Activated CD4-positive, alpha-beta T cell treated with anti-CD3 and anti-CD28 coated beads for 36 hours (primary cell): ENCODE measurements at regions of chr9 and their contacts with region 1.

Region 1: DNA sequence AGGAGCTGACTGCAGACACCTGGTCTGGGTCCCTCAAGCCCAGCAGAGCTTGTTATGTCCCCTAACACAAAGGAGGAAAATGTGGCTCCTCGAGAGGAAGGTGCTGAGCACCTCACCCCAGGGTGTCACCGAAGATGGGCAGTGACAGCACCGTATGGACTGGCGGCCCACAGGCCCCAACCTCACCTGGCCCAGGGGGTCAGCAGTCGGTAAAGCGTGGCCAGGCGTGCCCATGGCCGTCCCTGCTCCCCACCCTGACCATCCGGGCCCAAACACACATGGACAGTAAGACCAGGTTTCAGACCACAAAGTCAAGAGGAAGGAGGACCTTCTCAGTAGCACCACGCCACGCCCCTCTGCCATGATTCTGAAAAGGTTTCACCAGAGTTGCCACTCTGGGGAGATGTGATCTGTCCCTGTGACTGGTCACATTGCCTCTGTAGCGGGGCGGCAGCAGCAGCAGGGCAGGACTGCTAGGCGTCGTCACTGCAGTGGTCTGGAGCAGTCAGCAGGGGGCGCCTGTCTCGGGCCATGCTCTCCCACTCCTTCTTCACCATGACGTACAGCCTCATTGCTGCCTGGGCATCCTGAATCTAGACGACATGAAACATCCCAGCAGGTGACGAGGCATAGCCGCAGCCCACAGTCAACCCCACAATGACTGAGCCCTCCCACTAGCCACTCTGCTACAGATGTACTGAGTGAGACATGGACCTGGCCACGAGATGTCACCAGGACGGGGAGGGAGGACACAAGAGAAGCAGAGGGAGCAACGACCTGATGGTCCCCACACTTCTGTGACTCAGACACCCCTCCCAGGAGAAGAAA is 11.1 kb downstream of the REXO4 start:
- DNase-seq: peak; percentile 93
- ATAC-seq: peak; percentile 94
- H3K4me3 Mint-ChIP-seq: no peak overlapping the region
- H3K27ac Mint-ChIP-seq: peak overlapping the region; percentile 48
- H3K4me1 Mint-ChIP-seq: peaks cover 6% of the 10 kb centered on the region
- H3K27me3 Mint-ChIP-seq: no peaks in the 10 kb centered on the region

Region 2: DNA sequence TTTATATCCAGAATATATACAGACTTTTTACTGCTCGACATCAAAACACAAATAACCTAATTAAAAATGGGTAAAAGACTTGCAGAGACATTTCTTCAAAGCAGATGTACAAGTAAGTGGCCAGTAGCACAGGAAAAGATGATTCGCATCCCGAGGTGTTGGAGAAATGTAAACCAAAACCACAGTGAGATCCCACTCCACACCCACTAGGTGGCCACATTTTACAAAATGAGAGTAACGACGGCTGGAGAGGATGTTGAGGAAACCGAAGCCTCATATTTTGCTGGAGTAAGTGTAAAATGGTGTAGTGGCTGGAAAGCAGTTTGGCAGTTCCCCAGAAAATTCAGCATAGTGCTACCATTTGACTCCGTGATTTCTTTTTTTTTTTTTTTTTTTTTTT is 221.7 kb before region 1 on chr9:
- CTCF ChIA-PET with region 1: interaction called, 4 read pairs
- POLR2A ChIA-PET with region 1: no interaction called
- intact Hi-C with region 1: loop called in 1 of 2 experiments (anchors 2 kb)
- DNase-seq: peak; percentile 70
- ATAC-seq: peak; percentile 54
- H3K4me3 Mint-ChIP-seq: no peak overlapping the region
- H3K27ac Mint-ChIP-seq: no peak overlapping the region
- H3K4me1 Mint-ChIP-seq: peaks cover 23% of the 10 kb centered on the region
- H3K27me3 Mint-ChIP-seq: peaks cover 14% of the 10 kb centered on the region

Region 3: DNA sequence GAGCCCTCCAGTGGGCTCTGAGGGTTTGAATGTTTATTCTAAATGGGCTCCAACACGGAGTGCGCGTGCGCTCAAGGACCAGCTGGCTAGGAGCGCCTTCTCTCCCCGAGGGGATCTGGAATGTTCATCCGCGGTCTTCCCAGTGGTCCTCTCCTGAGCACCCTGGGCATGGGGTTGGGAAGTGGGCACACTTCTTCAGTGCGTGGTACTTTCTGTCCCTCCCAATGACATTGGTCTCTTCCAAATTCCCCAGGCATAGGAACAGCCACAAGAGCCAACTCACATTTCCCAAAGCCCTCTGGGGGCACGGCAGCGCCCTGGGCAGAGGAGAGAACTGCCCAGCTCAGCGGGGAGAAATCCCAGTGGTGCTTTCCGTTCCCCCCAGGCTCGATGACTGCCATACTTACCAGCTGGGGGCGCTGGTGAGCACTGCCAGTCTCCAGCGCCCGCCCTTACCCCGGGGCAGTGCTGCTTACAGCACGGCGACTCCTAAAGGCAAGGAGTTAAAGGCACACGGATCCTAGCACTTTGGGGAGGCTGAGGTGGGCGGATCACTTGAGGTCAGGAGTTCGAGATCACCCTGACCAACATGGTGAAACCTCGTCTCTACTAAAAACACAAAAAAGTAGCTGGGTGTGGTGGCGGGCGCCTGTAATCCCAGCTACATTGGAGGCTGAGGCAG is 167.7 kb before region 1 on chr9:
- CTCF ChIA-PET with region 1: no interaction called
- POLR2A ChIA-PET with region 1: no interaction called
- intact Hi-C with region 1: loop called in 1 of 2 experiments (anchors 1 kb)
- DNase-seq: peak; percentile 88
- ATAC-seq: peak; percentile 97
- H3K4me3 Mint-ChIP-seq: peak overlapping the region; percentile 52
- H3K27ac Mint-ChIP-seq: no peak overlapping the region
- H3K4me1 Mint-ChIP-seq: peaks cover 7% of the 10 kb centered on the region
- H3K27me3 Mint-ChIP-seq: peaks cover 5% of the 10 kb centered on the region

Region 4: DNA sequence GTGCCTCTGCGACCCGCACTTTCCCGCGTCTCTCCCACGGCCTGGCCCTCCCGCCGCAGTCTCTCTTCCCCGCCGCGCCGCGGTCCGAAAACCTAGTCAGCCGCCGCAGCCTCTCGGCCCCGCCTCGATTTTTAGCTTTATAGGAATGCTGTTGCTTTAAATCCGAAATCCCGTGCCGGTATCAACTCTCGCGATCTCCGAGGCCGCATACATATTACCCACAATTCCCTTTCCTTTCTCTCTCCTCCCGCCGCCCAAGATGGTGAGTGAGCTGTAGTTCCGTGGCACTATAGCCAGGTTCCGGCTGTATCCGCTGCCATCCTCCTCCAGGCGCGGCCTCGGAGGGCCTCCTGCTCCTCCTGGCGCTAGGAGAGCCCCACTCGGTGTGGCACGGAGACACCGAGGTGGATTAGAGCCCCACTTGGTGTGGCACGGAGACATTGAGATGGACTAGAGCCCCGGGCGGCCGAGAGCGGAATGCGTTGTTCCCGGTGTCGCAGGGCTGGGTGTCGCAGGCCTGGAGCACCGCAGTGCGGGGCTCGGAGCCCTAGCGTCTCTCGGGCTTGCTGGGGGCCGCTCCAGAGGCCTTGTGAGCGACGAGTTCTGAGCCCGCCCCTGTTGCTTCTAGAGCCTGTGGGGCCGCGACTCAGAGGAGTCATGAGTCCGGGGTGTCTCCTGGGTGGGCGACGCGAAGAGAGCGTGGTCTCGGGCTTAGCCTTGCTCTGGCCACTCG is 58.5 kb before region 1 on chr9 and contains the starts of genes MED22 and RPL7A:
- CTCF ChIA-PET with region 1: no interaction called
- POLR2A ChIA-PET with region 1: no interaction called
- intact Hi-C with region 1: loop called in 1 of 2 experiments (anchors 2 kb)
- DNase-seq: peak; percentile 96
- ATAC-seq: peak; percentile 83
- H3K4me3 Mint-ChIP-seq: peak within 1 kb of the TSS; percentile 97
- H3K27ac Mint-ChIP-seq: peak within 1 kb of the TSS; percentile 97
- H3K4me1 Mint-ChIP-seq: peaks cover 36% of the 10 kb centered on the region
- H3K27me3 Mint-ChIP-seq: no peaks in the 10 kb centered on the region
- total RNA-seq, gene MED22: 22.9 to 26.4 TPM
- total RNA-seq, gene RPL7A: 3,179 to 3,246 TPM

Region 5: DNA sequence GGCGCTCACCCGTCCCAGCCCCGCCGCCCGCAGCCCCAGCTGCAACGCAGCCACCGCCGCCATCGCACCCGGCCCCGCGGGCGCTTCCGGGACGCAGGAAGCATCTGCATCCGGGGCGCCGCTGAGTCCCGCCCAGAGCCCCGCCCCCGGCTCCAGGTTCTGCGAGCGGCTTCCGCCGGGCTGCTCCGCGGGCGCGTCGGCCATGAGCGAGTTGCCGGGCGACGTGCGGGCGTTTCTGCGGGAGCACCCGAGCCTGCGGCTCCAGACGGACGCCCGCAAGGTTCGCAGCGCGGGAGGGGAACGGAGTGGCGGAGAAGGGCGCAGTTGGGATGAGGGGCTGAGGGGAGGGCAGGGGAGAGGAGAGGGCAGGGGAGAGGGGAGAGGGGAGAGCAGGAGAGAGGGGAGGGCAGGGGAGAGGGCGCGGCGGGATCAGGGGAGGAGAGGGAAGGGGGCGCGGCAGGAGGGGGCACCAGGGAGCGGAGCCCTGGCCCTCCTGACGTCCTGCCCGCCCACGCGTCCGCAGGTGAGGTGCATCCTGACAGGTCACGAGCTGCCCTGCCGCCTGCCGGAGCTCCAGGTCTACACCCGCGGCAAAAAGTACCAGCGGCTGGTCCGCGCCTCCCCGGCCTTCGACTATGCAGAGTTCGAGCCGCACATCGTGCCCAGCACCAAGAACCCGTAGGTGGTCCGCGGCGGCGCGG is 50.2 kb before region 1 on chr9 and contains the starts of genes SURF1 and SURF2:
- CTCF ChIA-PET with region 1: interaction called, 4 read pairs
- POLR2A ChIA-PET with region 1: no interaction called
- intact Hi-C with region 1: loop called (anchors 1 to 5 kb)
- DNase-seq: peak; percentile 96
- ATAC-seq: peak; percentile 84
- H3K4me3 Mint-ChIP-seq: peak within 1 kb of the TSS; percentile 91
- H3K27ac Mint-ChIP-seq: peak within 1 kb of the TSS; percentile 85
- H3K4me1 Mint-ChIP-seq: peaks cover 52% of the 10 kb centered on the region
- H3K27me3 Mint-ChIP-seq: no peaks in the 10 kb centered on the region
- total RNA-seq, gene SURF1: 17.4 to 29.1 TPM
- total RNA-seq, gene SURF2: 17.3 to 21.8 TPM

Region 6: DNA sequence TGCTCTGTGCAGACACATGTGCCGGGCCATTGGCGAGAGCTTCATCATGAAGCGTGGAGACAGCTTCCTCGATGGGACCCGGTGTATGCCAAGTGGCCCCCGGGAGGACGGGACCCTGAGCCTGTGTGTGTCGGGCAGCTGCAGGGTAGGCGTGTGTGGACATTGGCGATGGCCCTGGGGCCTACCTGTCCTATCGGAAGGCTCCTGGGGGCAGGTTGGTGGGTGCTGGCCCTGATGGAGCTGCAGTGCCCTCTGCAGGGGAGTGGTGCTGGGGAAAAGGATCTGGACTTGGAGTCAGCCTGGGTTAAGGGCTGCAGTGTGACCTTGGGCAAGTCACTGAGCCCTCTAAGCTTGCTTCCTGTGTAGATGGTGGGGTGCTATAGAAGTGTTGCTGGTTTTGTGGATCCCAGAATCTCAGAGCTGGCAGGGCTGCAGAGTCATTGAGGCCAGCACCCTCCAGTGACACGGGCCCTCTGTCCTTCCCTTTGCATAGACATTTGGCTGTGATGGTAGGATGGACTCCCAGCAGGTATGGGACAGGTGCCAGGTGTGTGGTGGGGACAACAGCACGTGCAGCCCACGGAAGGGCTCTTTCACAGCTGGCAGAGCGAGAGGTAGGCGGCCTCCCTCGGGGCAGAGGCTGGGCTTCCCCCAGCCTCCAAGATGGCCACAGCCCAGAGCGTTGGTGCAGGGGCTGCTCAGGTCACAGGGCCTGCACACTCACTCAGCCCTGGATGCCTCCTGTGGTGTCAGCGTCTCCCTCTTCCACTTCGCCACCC is 31.2 kb after region 1 on chr9:
- CTCF ChIA-PET with region 1: no interaction called
- POLR2A ChIA-PET with region 1: no interaction called
- intact Hi-C with region 1: no loop called
- DNase-seq: peak; percentile 36
- ATAC-seq: peak; percentile 36
- H3K4me3 Mint-ChIP-seq: no peak overlapping the region
- H3K27ac Mint-ChIP-seq: no peak overlapping the region
- H3K4me1 Mint-ChIP-seq: no peaks in the 10 kb centered on the region
- H3K27me3 Mint-ChIP-seq: no peaks in the 10 kb centered on the region

Region 7: DNA sequence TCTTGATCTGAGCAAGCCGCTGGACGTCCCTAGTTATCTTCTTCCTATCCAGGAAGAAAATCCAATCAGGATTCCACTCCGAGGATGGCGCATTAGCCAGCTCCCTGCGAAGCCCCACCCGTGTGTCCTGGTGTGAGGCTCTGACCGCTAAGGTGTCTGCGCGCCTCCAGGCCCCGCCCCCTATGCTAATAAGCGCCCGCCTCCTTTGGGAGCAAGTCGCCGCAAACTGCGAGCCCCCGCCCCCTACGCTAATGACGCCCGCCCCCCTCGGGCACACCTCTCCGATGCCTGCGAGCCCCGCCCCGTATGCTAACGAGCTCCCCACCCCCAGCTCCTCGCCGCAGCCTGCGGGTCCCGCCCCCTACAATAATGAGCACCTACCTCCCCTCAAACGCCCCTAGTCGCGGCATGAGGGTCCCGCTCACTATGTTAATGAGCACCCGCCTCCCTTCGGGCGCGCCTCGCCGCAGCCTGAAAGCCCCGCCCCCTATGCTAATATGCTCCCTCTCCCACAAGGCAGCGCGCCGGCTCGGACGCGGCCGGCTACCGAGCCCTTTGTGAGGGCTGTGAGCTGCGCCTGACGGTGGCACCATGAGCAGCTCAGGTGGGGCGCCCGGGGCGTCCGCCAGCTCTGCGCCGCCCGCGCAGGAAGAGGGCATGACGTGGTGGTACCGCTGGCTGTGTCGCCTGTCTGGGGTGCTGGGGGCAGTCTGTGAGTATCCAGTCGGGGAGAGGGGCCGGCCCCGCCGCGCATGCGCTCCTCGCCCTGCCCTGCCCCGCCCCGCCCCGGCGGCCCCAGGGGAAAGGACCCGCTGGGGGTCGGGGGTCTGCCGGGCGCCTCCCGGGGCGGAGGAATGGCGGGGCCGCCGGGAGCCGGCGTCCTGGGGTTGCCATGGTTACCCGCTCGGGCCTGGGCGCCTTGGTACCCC is 53.0 kb after region 1 on chr9 and contains the start of gene CACFD1:
- CTCF ChIA-PET with region 1: no interaction called
- POLR2A ChIA-PET with region 1: no interaction called
- intact Hi-C with region 1: loop called in 1 of 2 experiments (anchors 1 kb)
- DNase-seq: peak; percentile 96
- ATAC-seq: peak; percentile 88
- H3K4me3 Mint-ChIP-seq: peak within 1 kb of the TSS; percentile 74
- H3K27ac Mint-ChIP-seq: peak within 1 kb of the TSS; percentile 42
- H3K4me1 Mint-ChIP-seq: no peaks in the 10 kb centered on the region
- H3K27me3 Mint-ChIP-seq: no peaks in the 10 kb centered on the region
- total RNA-seq, gene CACFD1: 0.87 to 0.90 TPM

Region 8: DNA sequence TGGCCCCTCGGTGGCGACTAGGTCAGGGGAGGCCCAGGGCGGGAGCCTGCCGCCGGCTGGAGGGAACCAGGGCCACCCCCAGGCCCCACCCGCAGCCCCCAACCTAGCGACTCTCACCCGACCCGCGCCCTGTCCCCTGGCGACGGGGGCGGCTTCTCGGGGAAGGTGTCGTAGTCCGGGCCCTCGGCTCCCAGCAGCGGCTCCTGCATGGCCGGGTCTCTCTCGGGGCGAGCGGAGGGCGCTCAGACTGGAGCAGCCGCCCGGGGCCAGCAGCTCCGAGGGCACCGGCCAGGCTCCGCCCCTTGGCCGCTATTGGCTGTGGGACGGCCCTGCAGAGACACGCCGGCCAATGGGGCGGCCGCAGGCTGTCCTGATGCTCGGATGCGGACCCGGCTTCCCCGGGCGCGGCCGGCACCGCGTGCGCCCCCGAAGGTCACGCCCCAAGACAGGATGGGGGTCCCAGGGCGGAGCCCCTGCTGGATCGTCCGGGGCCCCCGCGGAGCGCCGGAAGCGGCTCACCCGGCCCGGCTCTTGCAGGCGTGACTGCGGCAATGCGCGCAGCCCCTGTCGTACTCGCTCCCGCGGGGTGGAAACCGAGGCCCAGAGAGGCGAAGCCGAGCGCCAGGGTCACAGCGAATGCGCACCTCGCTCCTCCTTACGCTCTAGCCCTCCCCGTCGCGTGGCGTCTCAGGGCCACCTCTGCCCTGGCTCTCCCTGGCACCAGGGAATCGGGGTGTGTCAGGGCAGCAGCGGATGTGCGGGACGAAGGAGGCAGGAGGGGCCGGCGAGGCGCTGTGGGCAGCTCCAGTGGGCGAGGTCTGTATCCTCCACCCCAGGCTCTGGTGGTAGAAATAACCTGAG is 72.4 kb after region 1 on chr9 and contains the start of gene SLC2A6:
- CTCF ChIA-PET with region 1: no interaction called
- POLR2A ChIA-PET with region 1: interaction called, 3 read pairs
- intact Hi-C with region 1: loop called in 1 of 2 experiments (anchors 2 kb)
- DNase-seq: peak; percentile 89
- ATAC-seq: peak; percentile 100
- H3K4me3 Mint-ChIP-seq: peak within 1 kb of the TSS; percentile 67
- H3K27ac Mint-ChIP-seq: no peak within 1 kb of the TSS
- H3K4me1 Mint-ChIP-seq: peaks cover 6% of the 10 kb centered on the region
- H3K27me3 Mint-ChIP-seq: no peaks in the 10 kb centered on the region
- total RNA-seq, gene SLC2A6: 1.6 to 1.9 TPM